ENCODE measurements at regions of chr4 and their contacts with region 1.

Region 1: GRCh38 chr4:60223208-60223923 is 976.8 kb upstream of the ADGRL3 start:
- DNase-seq: no peak
- H3K4me3 ChIP-seq: no peak overlapping the region
- H3K27ac ChIP-seq: no peak overlapping the region
- H3K27me3 ChIP-seq: no peaks in the 10 kb centered on the region
- CTCF ChIP-seq: no peak

Region 2: GRCh38 chr4:60241866-60242265 is 18.5 kb after region 1 on chr4:
- intact Hi-C with region 1: loop called in 1 of 2 experiments (anchors 1 kb)
- DNase-seq: peak in 2 of 10 donors; percentile 33 to 55
- H3K4me3 ChIP-seq: no peak overlapping the region
- H3K27ac ChIP-seq: no peak overlapping the region
- H3K27me3 ChIP-seq: no peaks in the 10 kb centered on the region
- CTCF ChIP-seq: no peak

Region 3: DNA sequence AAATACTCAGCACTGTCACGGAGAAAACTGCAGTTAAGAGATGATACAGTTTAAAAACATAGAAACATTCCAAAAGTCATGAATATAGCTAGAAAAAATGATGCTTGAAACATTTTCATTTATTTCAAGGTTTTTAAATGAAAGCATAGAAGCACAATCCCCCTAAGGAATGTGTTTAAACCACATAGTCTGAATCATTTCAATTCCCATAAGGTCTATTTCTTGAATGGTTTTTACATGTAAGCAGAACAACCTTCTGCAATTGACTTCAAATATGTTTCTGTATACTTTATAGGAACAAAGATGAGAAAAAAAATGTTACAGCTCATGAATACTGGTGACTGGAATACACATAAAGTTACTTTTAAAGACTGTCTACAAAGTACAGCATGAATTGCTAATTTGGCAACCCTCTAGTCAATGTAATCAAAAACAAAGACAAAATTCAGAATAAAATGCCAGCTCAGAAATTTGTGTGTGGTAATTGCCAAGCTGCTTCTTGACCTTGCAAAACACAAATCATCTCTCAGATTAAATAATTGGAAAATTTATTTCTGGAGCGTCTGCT is 90.3 kb after region 1 on chr4:
- intact Hi-C with region 1: no loop called
- DNase-seq: no peak
- H3K4me3 ChIP-seq: no peak overlapping the region
- H3K27ac ChIP-seq: no peak overlapping the region
- H3K27me3 ChIP-seq: no peaks in the 10 kb centered on the region
- CTCF ChIP-seq: no peak

Measured in dorsolateral prefrontal cortex (tissue), 120 donors.